ENCODE measurements at regions of chr14 and their contacts with region 1.

Region 1: DNA sequence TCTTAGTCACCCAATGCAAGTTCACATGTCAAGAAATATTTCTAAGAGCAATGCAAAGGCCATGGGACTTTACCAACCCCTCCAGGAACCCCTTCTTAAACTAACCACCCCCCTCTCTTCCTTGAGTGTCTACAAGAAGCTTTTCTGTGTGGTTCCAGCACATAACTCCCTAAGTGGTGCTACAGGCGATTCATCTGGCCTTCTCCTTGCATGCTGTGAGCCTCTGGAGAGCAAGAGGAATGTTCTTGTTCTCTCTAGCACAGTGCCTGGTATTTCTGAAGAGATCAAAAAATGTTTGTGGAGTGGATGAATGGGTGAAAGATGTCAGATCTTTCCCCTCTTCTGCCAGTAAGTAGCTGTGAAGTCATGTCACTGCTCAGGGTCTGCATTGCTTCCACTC is 5.9 kb upstream of the RNASE12 start:
- ATAC-seq: no peak
- H3K4me3 ChIP-seq: no peak overlapping the region
- H3K27ac ChIP-seq: no peak overlapping the region
- H3K4me1 ChIP-seq: no peaks in the 10 kb centered on the region

Region 2: GRCh38 chr14:20184181-20184580 is 412.9 kb before region 1 on chr14:
- in situ Hi-C with region 1: no loop called
- ATAC-seq: no peak
- H3K4me3 ChIP-seq: no peak overlapping the region
- H3K27ac ChIP-seq: no peak overlapping the region
- H3K4me1 ChIP-seq: no peaks in the 10 kb centered on the region

Region 3: GRCh38 chr14:20530771-20531571 is 66.1 kb before region 1 on chr14:
- in situ Hi-C with region 1: loop called in 1 of 9 experiments (anchors 10 kb)
- ATAC-seq: peak in 4 of 8 experiments; percentile 57 to 96 (median 82)
- H3K4me3 ChIP-seq: no peak overlapping the region
- H3K27ac ChIP-seq: no peak overlapping the region
- H3K4me1 ChIP-seq: no peaks in the 10 kb centered on the region

Measured in motor neuron (in vitro differentiated cells).